CD8-positive, alpha-beta T cell (primary cell): ENCODE measurements at regions of chr19 and their contacts with region 1.

Region 1: DNA sequence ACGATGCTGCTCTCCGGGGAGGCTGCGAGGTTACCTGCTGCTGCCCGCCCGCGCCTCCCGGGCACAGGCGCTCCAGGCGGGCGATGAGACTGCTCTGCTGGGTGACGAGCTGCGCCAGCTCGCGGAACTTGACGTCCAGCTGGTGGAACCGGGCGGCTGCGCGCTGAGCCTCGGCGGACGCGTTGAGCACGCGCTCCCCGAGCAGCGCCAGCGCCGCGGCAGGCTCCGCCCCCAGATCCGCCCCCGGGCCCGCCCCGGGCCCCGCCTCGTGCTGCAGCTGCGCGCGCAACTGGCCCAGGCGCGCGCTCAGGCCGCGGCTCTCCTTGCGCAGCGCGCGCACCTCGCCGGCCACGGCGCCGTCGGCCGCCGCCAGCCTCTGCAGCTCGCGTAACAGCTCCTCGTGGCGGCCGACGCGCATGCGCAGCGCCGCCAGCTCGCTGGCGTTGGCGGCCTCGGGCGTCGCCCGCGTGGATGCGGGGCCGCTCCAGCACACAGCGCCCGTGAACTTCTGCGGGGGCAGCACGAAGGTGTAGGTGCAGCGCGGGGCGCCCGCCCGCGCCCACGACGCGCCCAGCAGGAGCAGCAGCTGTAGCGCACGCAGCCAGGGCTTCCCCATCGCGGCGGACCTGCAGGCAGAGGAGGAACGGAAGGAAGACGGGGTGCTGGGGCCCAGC is 6.4 kb downstream of the ANGPTL6 start:
- DNase-seq: peak; percentile 79 to 97 (median 90)
- ATAC-seq: peak; percentile 96
- H3K4me3 ChIP-seq: peak overlapping the region; percentile 41 to 67
- H3K4me3 Mint-ChIP-seq: peak overlapping the region; percentile 29
- H3K27ac ChIP-seq: peak overlapping the region; percentile 62 to 70
- H3K27ac Mint-ChIP-seq: peak overlapping the region; percentile 45
- H3K4me1 ChIP-seq: peaks cover 24% of the 10 kb centered on the region
- H3K4me1 Mint-ChIP-seq: peaks cover 18% of the 10 kb centered on the region
- H3K27me3 ChIP-seq: no peaks in the 10 kb centered on the region
- H3K27me3 Mint-ChIP-seq: no peaks in the 10 kb centered on the region
- CTCF ChIP-seq: no peak

Region 2: GRCh38 chr19:9757544-9758501 is 338.3 kb before region 1 on chr19:
- CTCF ChIA-PET with region 1: no interaction called
- POLR2A ChIA-PET with region 1: no interaction called
- intact Hi-C with region 1: no loop called
- DNase-seq: no peak
- ATAC-seq: no peak
- H3K4me3 ChIP-seq: no peak overlapping the region
- H3K4me3 Mint-ChIP-seq: no peak overlapping the region
- H3K27ac ChIP-seq: no peak overlapping the region
- H3K27ac Mint-ChIP-seq: no peak overlapping the region
- H3K4me1 ChIP-seq: no peaks in the 10 kb centered on the region
- H3K4me1 Mint-ChIP-seq: no peaks in the 10 kb centered on the region
- H3K27me3 ChIP-seq: no peaks in the 10 kb centered on the region
- H3K27me3 Mint-ChIP-seq: no peaks in the 10 kb centered on the region
- CTCF ChIP-seq: no peak

Region 3: GRCh38 chr19:10085641-10086590 is 10.2 kb before region 1 on chr19 and contains the start of gene SHFL:
- CTCF ChIA-PET with region 1: interaction called, 4 read pairs
- POLR2A ChIA-PET with region 1: interaction called, 4 read pairs
- intact Hi-C with region 1: loop called in 1 of 2 experiments (anchors 1 kb)
- DNase-seq: peak; percentile 70 to 93 (median 83)
- ATAC-seq: peak; percentile 93
- H3K4me3 ChIP-seq: peak within 1 kb of the TSS; percentile 99 to 100
- H3K4me3 Mint-ChIP-seq: peak within 1 kb of the TSS; percentile 87
- H3K27ac ChIP-seq: peak within 1 kb of the TSS; percentile 73 to 88
- H3K27ac Mint-ChIP-seq: peak within 1 kb of the TSS; percentile 90
- H3K4me1 ChIP-seq: peaks cover 6% of the 10 kb centered on the region
- H3K4me1 Mint-ChIP-seq: peaks cover 10% of the 10 kb centered on the region
- H3K27me3 ChIP-seq: no peaks in the 10 kb centered on the region
- H3K27me3 Mint-ChIP-seq: no peaks in the 10 kb centered on the region
- CTCF ChIP-seq: no peak
- total RNA-seq, gene SHFL: 56.4 to 61.6 TPM

Region 4: GRCh38 chr19:10112895-10113591 is 17.0 kb after region 1 on chr19:
- CTCF ChIA-PET with region 1: interaction called, 71 read pairs
- POLR2A ChIA-PET with region 1: interaction called, 53 read pairs
- intact Hi-C with region 1: loop called (anchors 1 kb)
- DNase-seq: peak in 8 of 9 experiments; percentile 46 to 90 (median 76)
- ATAC-seq: peak; percentile 59
- H3K4me3 ChIP-seq: peak overlapping the region in 1 of 2 experiments; percentile 54
- H3K4me3 Mint-ChIP-seq: peak overlapping the region; percentile 67
- H3K27ac ChIP-seq: peak overlapping the region; percentile 44 to 90
- H3K27ac Mint-ChIP-seq: peak overlapping the region; percentile 89
- H3K4me1 ChIP-seq: peaks cover 39% of the 10 kb centered on the region
- H3K4me1 Mint-ChIP-seq: peaks cover 44% of the 10 kb centered on the region
- H3K27me3 ChIP-seq: no peaks in the 10 kb centered on the region
- H3K27me3 Mint-ChIP-seq: no peaks in the 10 kb centered on the region
- CTCF ChIP-seq: peak; percentile 63

Region 5: DNA sequence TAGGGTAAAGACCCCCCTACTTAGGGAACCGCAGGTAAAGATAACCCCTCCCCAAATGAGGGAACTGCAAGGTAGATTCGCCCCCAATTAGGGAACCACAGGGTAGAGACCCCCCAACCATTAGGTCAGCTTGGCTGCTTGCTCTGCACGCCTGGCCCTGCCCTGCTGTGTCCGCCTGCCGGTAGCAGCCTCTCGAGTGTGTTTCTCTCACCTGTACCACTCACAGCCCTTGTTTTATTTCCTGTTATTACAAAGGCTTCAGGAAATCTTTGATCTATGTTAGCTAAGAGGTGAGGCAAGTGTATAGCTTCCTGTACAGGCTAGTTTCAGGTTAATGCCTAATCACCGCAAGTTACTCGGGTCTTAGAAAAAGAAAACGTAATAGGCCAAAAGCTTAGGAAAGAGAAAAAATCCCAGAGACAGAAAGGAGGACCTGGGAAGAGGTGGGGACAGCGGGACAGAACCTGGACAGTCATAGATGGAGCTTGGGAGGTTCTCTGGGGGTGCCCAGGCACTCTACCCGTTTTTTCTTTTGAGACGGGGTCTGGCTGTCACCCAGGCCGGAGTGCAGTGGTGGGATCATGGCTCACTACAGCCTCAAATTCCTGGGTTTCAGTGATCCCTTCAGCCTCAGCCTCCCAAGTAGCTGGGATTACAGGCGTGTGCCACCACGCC is 46.8 kb after region 1 on chr19:
- CTCF ChIA-PET with region 1: interaction called, 10 read pairs
- POLR2A ChIA-PET with region 1: interaction called, 13 read pairs
- intact Hi-C with region 1: no loop called
- DNase-seq: peak; percentile 19 to 86 (median 58)
- ATAC-seq: peak; percentile 94
- H3K4me3 ChIP-seq: peak overlapping the region; percentile 11 to 45
- H3K4me3 Mint-ChIP-seq: peak overlapping the region; percentile 76
- H3K27ac ChIP-seq: peak overlapping the region; percentile 80 to 94
- H3K27ac Mint-ChIP-seq: peak overlapping the region; percentile 98
- H3K4me1 ChIP-seq: peaks cover 45% of the 10 kb centered on the region
- H3K4me1 Mint-ChIP-seq: peaks cover 42% of the 10 kb centered on the region
- H3K27me3 ChIP-seq: no peaks in the 10 kb centered on the region
- H3K27me3 Mint-ChIP-seq: no peaks in the 10 kb centered on the region
- CTCF ChIP-seq: peak; percentile 29